ENCODE measurements at regions of chr5 and their contacts with region 1.

Region 1: DNA sequence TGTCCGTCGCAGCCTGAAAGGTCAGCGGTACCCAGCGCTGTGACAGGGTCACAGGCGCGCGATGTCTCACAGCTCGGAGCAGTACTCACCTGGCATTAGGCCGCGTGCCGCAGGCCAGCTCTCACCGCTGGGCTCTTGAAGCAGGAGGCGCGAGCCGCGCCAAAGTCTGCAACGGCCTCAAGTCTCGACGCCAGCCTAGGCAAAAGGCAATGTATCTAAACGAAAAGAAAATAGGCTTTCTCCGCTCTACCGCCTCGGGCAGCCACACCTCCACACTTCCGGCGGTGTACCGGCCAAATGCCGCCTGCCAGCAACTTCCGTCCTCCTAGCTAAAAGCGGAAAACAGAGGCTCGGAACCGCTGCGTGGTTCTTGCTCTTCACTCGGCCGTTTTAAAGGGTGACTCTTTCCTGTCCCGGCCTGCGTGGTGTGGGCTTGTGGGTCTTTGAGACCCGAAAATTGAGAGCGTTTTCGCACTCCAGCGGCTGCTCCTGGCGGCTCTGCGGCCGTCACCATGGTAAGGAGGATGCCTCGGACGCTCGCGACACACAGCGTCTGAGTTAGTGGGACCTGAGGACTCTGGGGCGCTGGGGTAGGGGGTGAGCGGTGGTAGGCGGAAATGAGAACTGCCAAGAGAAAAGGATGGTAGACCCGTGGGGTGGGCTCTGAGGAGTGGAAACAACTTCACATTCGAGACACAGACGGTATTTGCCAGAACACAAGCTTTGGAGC is at the starts of genes GFM2 and NSA2:
- DNase-seq: peak; percentile 89
- ATAC-seq: peak; percentile 88
- H3K4me3 Mint-ChIP-seq: peak within 1 kb of the TSS; percentile 99
- H3K27ac Mint-ChIP-seq: peak within 1 kb of the TSS; percentile 98
- H3K4me1 Mint-ChIP-seq: peaks cover 36% of the 10 kb centered on the region
- H3K27me3 Mint-ChIP-seq: no peaks in the 10 kb centered on the region
- CTCF ChIP-seq: no peak
- total RNA-seq, gene GFM2: 19.3 and 21.8 TPM in 2 replicates
- total RNA-seq, gene NSA2: 126 and 132 TPM in 2 replicates

Region 2: DNA sequence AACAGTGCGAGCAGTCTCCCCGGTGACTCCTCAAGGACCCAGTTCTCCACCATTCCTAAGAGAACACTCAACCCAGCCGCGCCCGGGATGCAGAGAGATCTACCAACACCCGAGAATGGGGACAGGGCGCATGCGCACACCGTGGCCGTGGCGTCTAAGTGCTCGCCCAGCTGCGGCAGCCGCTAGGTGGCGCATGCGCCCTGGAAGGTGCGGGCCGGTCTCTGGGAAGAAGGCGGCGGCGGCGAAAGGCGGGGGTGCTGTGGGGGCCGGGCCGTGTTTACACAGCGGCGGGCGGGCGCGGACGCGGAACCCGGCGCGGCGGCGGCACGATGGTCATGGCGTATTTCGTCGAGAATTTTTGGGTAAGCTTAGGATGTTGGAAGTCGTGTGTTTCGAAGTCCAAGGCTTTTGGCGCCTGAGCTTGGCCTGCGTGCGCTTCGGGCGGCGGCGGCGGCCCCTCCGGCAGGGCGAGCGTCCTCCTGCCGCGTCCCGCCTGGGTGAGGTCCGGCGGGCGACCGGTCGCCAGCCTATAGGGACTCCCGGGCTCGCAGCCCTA is 1811.2 kb before region 1 on chr5 and contains the start of gene FCHO2:
- CTCF ChIA-PET with region 1: no interaction called
- POLR2A ChIA-PET with region 1: no interaction called
- intact Hi-C with region 1: loop called (anchors 2 kb)
- DNase-seq: peak; percentile 96
- ATAC-seq: peak; percentile 96
- H3K4me3 Mint-ChIP-seq: peak within 1 kb of the TSS; percentile 92
- H3K27ac Mint-ChIP-seq: peak within 1 kb of the TSS; percentile 76
- H3K4me1 Mint-ChIP-seq: peaks cover 14% of the 10 kb centered on the region
- H3K27me3 Mint-ChIP-seq: peaks cover 22% of the 10 kb centered on the region
- CTCF ChIP-seq: no peak
- total RNA-seq, gene FCHO2: 3.2 and 5.3 TPM in 2 replicates

Region 3: DNA sequence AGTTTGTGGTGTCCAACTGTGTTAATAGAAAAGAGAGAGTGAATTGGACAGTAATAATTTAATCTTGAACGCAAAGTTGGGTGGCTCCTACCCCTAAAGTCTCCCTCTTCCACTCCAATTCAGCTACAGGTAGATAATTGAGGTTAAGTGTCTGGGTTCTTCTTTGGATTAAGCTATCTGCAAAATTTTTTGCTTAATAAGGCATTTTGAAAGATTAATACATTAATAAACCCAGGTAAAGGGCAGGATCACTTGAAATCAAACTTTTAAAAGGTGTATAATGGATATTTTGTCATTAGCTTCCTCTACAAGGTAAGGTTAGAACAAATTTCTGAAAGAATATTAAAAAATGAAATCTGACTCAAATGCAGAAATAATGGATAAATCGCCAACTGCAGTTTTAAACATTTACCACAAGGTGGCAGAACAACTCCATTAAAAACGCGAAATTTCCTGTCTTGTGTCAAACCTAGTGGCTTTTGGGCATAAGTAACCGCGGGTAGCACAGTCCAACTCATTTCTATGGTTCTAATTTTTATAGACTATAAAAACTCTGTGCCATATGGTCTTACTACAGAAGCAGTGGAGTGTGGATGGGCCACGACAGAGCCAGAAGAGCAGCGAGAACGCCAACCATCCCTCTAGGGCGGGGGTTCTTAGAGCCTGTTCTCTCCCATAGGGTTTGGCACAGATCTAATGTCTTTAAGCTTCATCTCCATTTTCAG is 864.5 kb before region 1 on chr5:
- CTCF ChIA-PET with region 1: interaction called, 3 read pairs
- POLR2A ChIA-PET with region 1: no interaction called
- intact Hi-C with region 1: loop called (anchors 2 kb)
- DNase-seq: no peak
- ATAC-seq: no peak
- H3K4me3 Mint-ChIP-seq: no peak overlapping the region
- H3K27ac Mint-ChIP-seq: no peak overlapping the region
- H3K4me1 Mint-ChIP-seq: peaks cover 5% of the 10 kb centered on the region
- H3K27me3 Mint-ChIP-seq: peaks cover 15% of the 10 kb centered on the region
- CTCF ChIP-seq: peak; percentile 69

Region 4: DNA sequence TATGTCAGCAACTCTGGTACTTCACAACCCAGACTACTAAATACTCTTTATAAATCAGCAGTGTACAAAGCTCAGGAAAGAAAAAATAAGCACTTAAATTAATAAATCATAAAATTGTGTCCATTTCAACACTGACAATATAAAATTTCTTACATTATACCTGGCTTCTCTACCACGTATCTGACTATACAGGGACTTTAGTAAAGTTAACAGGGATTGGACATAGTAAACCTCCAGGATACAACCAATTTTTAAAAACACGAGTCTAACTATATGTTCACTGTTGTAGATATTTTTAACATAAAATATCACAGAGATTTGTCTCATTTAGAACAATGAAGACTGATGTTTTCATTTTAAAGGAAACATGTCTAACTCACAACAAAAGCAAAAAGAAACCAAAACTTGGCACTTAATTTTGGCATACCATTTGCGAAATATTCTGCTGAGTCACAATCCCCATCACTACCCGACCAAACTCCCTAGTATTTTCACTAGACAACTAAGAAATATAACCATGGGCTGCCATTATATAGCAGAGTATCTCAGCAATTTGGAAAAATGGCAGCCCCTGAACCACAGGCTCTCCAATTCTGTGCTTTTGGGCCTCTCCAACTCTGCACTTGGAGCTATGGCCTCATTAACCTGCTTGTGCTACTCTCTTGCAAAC is 84.8 kb after region 1 on chr5:
- CTCF ChIA-PET with region 1: no interaction called
- POLR2A ChIA-PET with region 1: interaction called, 3 read pairs
- intact Hi-C with region 1: loop called (anchors 5 kb)
- DNase-seq: no peak
- ATAC-seq: no peak
- H3K4me3 Mint-ChIP-seq: peak overlapping the region; percentile 68
- H3K27ac Mint-ChIP-seq: no peak overlapping the region
- H3K4me1 Mint-ChIP-seq: peaks cover 32% of the 10 kb centered on the region
- H3K27me3 Mint-ChIP-seq: no peaks in the 10 kb centered on the region
- CTCF ChIP-seq: no peak

Region 5: GRCh38 chr5:74919487-74919886 is 152.5 kb after region 1 on chr5:
- CTCF ChIA-PET with region 1: interaction called, 4 read pairs
- POLR2A ChIA-PET with region 1: no interaction called
- intact Hi-C with region 1: loop called (anchors 1 kb)
- DNase-seq: no peak
- ATAC-seq: no peak
- H3K4me3 Mint-ChIP-seq: no peak overlapping the region
- H3K27ac Mint-ChIP-seq: no peak overlapping the region
- H3K4me1 Mint-ChIP-seq: no peaks in the 10 kb centered on the region
- H3K27me3 Mint-ChIP-seq: peaks cover 6% of the 10 kb centered on the region
- CTCF ChIP-seq: no peak

Region 6: DNA sequence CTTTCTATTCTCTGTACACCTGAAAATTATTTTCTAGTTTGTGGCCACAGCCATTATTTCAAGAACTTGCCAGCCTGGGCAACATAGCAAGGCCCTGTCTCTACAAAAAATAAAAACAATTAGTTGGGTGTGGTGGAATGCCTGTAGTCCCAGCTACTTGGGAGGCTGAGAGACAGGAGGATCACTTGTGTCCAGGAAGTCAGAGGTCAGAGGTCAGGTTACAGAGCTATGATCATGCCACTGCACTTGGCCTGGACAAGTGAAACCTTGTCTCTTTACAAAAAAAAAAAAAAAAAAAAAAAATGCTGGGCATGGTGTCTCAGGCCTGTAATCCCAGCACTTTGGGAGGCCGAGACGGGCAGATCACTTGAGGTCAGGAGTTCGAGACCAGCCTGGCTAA is 628.3 kb after region 1 on chr5:
- CTCF ChIA-PET with region 1: no interaction called
- POLR2A ChIA-PET with region 1: no interaction called
- intact Hi-C with region 1: no loop called
- DNase-seq: no peak
- ATAC-seq: no peak
- H3K4me3 Mint-ChIP-seq: no peak overlapping the region
- H3K27ac Mint-ChIP-seq: no peak overlapping the region
- H3K4me1 Mint-ChIP-seq: no peaks in the 10 kb centered on the region
- H3K27me3 Mint-ChIP-seq: no peaks in the 10 kb centered on the region
- CTCF ChIP-seq: no peak

Region 7: DNA sequence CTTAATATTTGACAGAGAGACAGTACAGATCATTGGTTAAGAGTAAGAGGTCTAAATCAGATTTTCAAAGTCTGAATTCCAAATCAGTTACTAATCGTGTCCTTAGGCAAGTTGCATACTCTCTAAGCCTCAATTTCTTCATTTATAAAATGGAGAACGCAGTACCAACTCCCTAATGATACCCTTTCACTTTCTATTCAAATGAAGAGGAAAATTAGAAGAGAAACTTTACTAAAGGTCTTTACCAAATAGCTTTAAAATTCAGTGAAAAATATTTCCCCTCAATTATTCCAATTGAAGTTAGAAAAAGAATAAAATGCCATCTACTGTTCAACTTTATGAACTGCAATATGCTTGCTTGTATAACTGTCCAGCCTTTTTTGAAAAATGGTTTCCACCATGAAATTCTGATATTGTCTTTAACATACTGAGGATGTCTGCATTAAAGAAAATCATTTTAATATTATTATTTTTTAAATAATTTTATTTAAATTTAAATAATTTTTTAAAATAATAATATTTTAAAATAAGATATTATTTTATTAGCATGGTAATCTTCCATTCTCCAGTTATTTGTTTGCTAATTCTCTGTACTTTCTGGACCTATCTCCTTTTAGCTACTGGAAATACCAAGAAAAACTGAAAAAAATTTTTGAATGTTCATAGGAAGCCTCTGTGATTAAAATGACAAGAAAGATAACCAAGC is 914.3 kb after region 1 on chr5:
- CTCF ChIA-PET with region 1: no interaction called
- POLR2A ChIA-PET with region 1: no interaction called
- intact Hi-C with region 1: loop called (anchors 10 kb)
- DNase-seq: no peak
- ATAC-seq: peak; percentile 45
- H3K4me3 Mint-ChIP-seq: no peak overlapping the region
- H3K27ac Mint-ChIP-seq: no peak overlapping the region
- H3K4me1 Mint-ChIP-seq: no peaks in the 10 kb centered on the region
- H3K27me3 Mint-ChIP-seq: no peaks in the 10 kb centered on the region
- CTCF ChIP-seq: peak; percentile 82